ENCODE measurements at regions of chr9 and their contacts with region 1.

Region 1: DNA sequence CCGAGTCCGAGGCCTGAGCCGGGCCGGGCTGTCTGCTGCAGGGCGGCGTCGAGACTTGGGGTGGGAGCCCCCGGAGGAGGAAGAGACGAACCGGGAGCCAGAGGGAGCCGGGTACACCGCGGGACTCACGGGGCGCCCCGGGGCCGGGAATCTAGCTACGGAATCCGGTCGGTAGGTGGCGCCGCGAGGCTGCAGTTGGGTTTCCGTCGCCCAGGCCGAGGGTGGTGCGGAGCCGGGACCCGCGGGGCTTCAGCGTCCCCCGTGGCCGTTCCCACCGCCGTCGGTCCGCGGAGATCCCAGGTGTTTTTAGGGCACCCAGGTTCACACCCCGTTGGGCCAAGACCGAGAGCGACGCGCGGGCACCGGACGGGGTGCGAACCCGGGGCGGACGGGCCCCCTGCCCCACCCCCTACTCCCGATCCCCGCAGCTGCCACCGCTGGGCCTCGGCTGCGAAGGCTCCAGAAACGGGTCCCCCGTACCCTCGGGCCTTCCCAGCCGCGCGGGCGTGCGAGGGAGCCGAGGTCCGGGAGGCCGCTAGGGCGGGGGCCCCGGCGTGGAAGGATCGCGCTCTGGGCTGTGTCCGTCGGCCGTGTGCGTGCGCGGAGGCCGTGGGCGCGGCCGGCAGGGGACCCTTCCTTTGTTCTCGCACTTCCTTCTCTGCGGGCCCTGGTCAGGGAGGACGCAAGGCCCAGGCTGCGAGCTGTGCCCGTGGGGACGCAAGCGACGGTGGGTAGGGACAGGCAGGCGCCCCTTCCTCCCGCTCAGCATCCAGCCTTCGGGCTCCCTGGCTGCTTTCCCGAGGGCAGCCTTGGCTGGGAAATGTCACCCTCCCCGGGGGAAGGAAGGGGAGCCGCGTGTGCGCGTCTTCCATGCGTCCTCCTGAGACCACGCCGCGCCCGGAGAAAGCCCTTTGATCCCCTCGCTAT is 146.6 kb downstream of the GAPVD1 start:
- DNase-seq: peak; percentile 59 to 81 (median 74)
- H3K4me3 ChIP-seq: peak overlapping the region; percentile 43 to 82 (median 66)
- H3K27ac ChIP-seq: peak overlapping the region in 2 of 59 donors; percentile 31 to 53
- H3K27me3 ChIP-seq: peaks cover 0 to 10% (median 0%) of the 10 kb centered on the region in 45 donors
- CTCF ChIP-seq: peak; percentile 45 to 98 (median 89)

Region 2: GRCh38 chr9:126490871-126491567 is 1082.8 kb after region 1 on chr9:
- intact Hi-C with region 1: loop called (anchors 2 to 5 kb)
- DNase-seq: peak in 3 of 10 donors; percentile 69 to 72 (median 70)
- H3K4me3 ChIP-seq: peak overlapping the region in 47 of 59 donors; percentile 2 to 54 (median 31)
- H3K27ac ChIP-seq: peak overlapping the region in 58 of 59 donors; percentile 38 to 92 (median 82)
- H3K27me3 ChIP-seq: no peaks in the 10 kb centered on the region
- CTCF ChIP-seq: peak; percentile 89 to 99 (median 96)

Region 3: DNA sequence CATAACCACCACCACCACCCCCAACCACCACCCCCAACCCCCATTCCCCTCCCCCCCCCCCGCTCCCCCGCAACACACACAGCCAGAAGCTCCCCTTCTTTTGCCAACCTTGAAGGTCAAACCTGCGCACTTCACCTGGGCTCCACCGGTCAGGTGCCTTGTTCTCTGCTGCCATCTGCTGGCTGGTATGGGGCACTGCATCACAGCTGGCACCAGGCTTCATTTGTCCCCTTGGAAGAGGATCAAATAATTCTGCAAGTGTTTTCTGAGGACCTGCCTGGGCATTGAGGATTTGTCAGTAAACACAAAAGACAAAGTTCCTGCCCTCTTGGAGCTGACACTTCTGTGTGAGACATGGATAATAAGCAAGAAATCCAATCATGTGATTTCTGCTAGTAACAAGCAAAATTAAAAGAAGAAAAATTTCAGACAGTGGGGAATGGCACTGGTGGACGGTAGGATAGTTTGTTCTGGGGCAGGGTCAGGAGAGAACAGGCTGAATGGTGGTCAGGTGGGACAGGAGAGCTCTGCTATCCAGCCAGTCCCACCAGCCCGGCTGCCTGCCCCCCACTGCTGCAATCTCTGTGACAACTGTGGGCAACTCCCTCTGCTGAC is 1149.9 kb after region 1 on chr9:
- intact Hi-C with region 1: loop called in 1 of 2 experiments (anchors 2 kb)
- DNase-seq: peak in 9 of 10 donors; percentile 35 to 70 (median 62)
- H3K4me3 ChIP-seq: no peak overlapping the region
- H3K27ac ChIP-seq: no peak overlapping the region
- H3K27me3 ChIP-seq: peaks cover 0 to 4% (median 0%) of the 10 kb centered on the region in 45 donors
- CTCF ChIP-seq: peak; percentile 60 to 95 (median 86)

Measured in dorsolateral prefrontal cortex (tissue), 120 donors.